ENCODE measurements at regions of chr1 and their contacts with region 1.

Region 1: DNA sequence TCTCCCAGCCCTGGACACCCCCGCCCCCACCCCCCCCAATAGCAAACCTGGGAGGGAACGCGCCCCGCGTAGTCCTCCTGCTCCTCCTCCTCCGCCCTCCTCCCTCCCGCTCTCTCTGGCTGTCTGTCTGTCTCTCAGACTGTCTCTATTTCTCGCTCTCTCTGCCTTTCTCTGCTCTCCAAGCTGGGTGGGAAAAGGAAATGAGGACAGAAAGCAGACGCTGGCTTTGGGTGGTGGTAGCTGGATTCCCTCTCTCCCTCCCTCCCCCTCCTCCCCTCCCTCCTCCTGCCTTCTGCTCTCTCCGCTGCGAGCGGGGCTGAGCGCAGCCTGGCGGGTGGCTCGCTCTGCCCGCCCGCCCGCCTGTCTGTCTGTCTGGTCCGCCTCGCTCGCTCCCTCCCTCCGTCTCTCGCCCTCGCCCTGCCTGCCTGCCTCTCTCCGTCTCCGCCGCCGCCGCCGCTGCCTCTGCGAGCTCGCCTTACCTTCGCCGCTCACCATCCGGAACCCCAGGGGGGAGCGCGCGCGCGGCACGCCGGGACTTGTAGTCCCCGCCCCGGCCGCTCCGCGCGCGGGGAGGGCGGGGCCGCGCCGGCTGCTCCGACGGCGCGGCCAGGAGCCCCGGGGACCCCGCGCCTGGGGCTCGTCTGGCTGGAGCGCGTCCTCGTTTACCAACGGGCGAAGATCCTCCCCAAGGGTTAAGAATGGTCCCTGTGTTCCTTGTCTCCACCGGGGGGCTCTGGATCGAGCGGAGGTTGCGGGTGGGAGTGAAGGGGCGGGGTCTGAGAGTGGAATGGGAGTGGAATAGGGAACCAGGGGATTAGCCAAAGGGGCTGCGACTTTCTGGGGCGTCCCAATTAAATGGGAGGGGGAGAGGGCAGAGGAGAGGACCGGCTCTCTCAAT is at the start of gene AHDC1:
- DNase-seq: peak; percentile 97
- total RNA-seq, gene AHDC1: 54.5 to 58.3 TPM

Region 2: GRCh38 chr1:27300341-27301051 is 303.4 kb before region 1 on chr1:
- intact Hi-C with region 1: loop called (anchors 5 to 10 kb)
- DNase-seq: peak; percentile 95

Region 3: GRCh38 chr1:27402349-27402754 is 201.6 kb before region 1 on chr1:
- intact Hi-C with region 1: loop called (anchors 2 to 5 kb)
- DNase-seq: peak; percentile 92

Region 4: GRCh38 chr1:27416387-27417111 is 187.4 kb before region 1 on chr1:
- intact Hi-C with region 1: loop called in 1 of 2 experiments (anchors 5 kb)
- DNase-seq: peak; percentile 4

Region 5: GRCh38 chr1:27487966-27488884 is 115.7 kb before region 1 on chr1:
- intact Hi-C with region 1: no loop called
- DNase-seq: no peak

Region 6: GRCh38 chr1:27556781-27557595 is 46.9 kb before region 1 on chr1:
- intact Hi-C with region 1: loop called (anchors 2 to 5 kb)
- DNase-seq: peak; percentile 98

Region 7: GRCh38 chr1:27588256-27589232 is 15.4 kb before region 1 on chr1:
- intact Hi-C with region 1: no loop called
- DNase-seq: no peak

Region 8: DNA sequence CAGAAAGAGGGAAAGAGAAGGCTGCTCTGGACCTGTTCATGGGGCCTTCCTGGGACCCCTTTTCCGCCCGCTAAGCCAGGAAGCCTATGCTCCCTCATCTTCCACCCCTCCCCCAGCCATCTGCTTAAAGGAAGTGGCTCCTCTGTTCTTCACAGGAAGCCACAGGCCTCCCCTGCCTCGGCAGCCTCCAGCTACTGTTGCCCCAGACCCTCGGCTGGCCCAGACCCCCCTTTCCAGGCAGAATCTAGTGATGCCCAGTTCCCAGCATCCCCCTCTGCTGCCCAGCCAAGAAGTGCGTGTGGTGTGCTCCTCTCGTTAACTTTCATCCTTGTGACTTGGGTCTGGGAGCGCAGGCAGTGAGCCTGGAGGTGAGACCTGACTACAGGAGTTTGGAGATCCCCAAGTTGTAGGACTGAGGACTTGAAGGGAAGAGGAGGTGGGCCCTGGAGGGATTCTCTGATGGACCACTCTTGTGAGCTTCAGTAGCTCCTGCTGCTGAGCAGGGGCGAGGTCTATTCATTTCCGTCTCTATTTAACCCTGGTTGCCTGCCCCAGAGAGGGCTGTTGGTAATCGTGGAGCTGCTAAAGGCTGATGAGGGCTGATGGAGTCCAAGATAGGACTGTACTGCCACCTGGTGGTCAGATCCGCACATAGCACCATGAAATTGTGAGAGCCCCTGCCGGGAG is 58.9 kb after region 1 on chr1:
- intact Hi-C with region 1: loop called (anchors 2 to 5 kb)
- DNase-seq: peak; percentile 91

Measured in posterior vena cava (tissue), 2 donors.